ENCODE measurements at regions of chr4 and their contacts with region 1.

Region 1: GRCh38 chr4:8241895-8242696 is 27.5 kb upstream of the HTRA3 start:
- DNase-seq: peak; percentile 92
- CTCF ChIP-seq: peak; percentile 89

Region 2: GRCh38 chr4:8215001-8215427 is 27.1 kb before region 1 on chr4:
- CTCF ChIA-PET with region 1: interaction called, 10 read pairs
- POLR2A ChIA-PET with region 1: no interaction called
- DNase-seq: no peak
- CTCF ChIP-seq: no peak

Region 3: DNA sequence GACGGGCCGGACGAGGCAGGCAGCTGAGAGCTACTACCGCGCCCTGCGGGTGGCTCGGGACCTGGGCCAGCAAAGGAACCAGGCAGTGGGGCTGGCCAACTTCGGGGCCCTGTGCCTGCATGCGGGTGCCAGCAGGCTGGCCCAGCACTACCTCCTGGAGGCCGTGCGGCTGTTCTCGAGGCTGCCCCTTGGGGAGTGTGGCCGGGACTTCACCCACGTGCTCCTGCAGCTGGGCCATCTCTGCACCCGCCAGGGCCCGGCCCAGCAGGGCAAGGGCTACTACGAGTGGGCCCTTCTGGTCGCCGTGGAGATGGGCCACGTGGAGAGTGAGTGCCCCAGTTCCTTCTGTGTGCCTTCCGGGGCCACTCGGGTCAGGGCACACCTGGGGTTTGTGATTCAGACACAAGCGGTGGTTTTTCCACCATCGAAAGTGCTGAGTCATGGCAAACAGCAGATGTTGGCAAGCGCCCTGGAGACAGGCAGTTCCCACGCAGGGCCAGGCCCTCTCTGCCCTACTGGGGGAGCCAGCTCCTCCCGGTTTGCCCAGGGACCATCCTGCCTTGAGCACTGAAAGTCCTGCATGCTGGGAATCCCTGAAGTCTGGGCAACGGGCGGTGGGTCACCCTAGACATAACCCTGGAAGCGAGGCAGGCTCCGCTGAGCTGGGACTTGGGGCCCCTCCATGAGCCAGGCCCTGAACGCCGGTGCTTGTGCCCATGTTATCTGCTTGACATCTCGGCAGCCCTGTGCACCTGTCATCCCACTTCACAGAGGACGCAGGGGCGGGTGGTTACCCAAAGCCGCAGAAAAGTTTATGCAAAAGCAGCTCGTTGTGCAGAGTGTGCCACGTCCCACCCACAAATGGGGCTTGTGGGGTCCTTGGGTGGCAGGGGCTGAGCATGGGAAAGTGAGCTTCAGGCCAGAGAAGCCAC is 13.5 kb before region 1 on chr4:
- CTCF ChIA-PET with region 1: interaction called, 54 read pairs
- POLR2A ChIA-PET with region 1: no interaction called
- DNase-seq: peak; percentile 71
- CTCF ChIP-seq: no peak

Region 4: GRCh38 chr4:8255698-8256441 is 13.8 kb after region 1 on chr4:
- CTCF ChIA-PET with region 1: interaction called, 15 read pairs
- POLR2A ChIA-PET with region 1: no interaction called
- DNase-seq: no peak
- CTCF ChIP-seq: no peak

Region 5: DNA sequence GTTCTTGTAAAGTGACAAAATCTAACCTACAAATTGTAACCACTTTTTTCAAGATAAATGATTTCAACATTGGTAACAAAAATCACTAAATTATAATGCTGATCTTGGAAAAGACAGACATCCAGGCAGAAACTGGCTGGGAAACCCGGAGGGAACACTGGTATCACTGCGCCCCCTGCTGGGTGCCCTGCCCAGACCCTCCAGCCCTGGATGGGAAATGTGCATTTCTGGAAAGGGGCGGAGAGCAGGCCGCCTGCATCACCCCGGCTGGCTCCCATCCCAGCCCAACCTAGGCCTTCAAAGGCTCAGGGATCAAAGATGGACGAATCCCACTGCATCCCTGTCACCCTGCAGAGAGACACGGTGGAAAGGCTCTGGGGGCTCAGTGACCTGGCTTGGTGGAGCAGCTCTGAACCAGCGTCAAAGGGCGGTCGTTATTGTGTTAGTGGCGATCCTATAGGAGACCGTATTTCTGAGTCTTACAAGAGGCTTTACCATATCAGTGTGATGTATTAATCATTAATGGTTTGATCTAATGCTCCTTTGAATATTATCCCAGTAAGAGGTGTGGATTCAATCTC is 161.2 kb after region 1 on chr4:
- CTCF ChIA-PET with region 1: interaction called, 36 read pairs
- POLR2A ChIA-PET with region 1: no interaction called
- DNase-seq: peak; percentile 78
- CTCF ChIP-seq: peak; percentile 80

Region 6: GRCh38 chr4:8410641-8411271 is 168.7 kb after region 1 on chr4:
- CTCF ChIA-PET with region 1: interaction called, 36 read pairs
- POLR2A ChIA-PET with region 1: no interaction called
- DNase-seq: no peak
- CTCF ChIP-seq: no peak

Region 7: GRCh38 chr4:8419181-8420041 is 177.3 kb after region 1 on chr4:
- CTCF ChIA-PET with region 1: interaction called, 10 read pairs
- POLR2A ChIA-PET with region 1: no interaction called
- DNase-seq: peak; percentile 73
- CTCF ChIP-seq: no peak

Region 8: DNA sequence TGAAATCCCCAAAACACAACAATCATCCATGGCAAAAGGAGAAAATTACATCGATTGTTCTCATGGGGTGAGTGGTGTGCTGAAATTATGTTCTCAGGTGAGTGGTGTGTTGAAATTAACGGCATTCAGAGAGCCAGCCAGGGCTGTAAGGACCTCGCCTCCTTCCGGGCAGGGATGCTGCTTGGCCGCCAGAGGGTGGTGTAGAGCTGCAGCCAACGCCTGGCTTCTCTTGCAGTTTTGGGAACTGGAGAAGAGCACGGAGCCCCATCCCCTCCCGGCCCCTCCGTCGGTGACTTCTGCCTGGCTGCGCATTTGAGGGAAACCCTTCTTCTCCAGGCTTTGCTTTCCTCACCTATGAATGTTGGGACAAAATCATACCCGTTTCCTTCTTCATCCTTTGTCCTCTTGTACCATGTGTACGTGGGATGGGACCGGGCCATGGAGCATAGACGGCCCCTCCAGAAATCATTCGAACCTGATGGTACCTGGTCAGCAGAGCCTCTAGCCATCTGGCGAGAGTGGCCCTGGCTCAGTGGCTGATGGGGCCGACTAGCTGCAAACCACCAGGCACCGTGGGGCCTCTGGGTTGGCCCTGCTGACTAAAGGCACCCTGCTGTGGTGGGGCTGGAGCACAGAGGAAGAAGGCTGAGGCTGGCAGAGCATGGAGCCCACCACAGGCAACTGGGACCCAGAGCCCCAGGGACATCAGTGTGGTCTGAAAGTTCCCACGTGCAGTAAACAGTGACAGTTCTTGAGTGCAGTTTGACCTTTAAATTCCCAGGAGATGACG is 226.8 kb after region 1 on chr4:
- CTCF ChIA-PET with region 1: no interaction called
- POLR2A ChIA-PET with region 1: no interaction called
- DNase-seq: peak; percentile 82
- CTCF ChIP-seq: peak; percentile 90